Activated CD8-positive, alpha-beta T cell treated with anti-CD3 and anti-CD28 coated beads, Interleukin-2, amount 10 ng/mL, durations not matched to agents 7 days and 5 days (primary cell): ENCODE measurements at regions of chr4 and their contacts with region 1.

Region 1: GRCh38 chr4:143538979-143539669 is 25.6 kb downstream of the SMARCA5 start:
- DNase-seq: no peak
- ATAC-seq: no peak
- H3K4me3 Mint-ChIP-seq: no peak overlapping the region
- H3K27ac Mint-ChIP-seq: no peak overlapping the region
- H3K4me1 Mint-ChIP-seq: no peaks in the 10 kb centered on the region
- H3K27me3 Mint-ChIP-seq: no peaks in the 10 kb centered on the region

Region 2: GRCh38 chr4:143441678-143442077 is 97.4 kb before region 1 on chr4:
- CTCF ChIA-PET with region 1: no interaction called
- POLR2A ChIA-PET with region 1: no interaction called
- DNase-seq: no peak
- ATAC-seq: no peak
- H3K4me3 Mint-ChIP-seq: no peak overlapping the region
- H3K27ac Mint-ChIP-seq: no peak overlapping the region
- H3K4me1 Mint-ChIP-seq: no peaks in the 10 kb centered on the region
- H3K27me3 Mint-ChIP-seq: peaks cover 8% of the 10 kb centered on the region

Region 3: DNA sequence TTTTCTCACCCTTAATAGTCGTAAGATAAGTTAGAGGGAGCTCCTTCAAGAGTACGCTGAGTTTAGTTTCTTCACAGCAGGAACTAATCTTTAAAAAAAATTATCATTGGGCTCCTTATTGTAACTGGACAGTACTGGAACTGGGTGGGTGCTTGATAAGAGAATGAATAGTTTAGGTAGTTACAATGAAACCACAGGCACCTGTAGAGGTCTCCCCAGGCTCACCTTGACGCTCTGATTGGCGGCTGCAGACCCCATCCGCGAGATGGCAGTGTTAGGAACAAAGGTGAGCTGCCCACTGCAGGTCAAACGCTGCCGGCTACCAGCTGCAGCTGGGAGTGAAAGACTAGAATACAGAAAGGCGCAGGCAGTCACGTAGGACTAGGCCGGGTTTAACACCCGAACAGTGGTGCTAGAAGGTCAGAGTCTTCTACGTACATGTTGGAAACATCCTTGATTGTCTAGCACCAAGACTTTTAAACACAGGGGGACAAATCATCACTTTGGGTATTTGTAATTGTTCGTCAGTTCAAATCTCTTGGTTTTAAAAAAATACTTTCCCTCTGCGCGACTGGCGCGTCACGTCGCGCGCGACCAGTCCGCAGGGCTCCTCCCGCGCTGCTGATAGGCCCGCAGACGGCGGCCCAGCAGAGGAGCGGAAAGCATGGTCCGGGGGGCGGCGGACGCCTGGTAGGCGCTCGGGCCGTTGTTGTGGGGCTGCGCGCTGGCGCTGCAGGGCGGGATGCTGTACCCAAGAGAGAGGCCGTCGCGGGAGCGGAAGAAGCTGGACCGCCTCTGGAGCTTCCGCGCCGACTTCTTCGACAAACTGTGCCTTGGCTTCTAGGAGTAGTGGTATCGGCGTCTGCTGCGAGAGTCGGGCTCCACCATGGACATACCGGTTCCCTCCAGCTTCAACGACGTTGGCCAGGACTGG is 20.0 kb after region 1 on chr4:
- CTCF ChIA-PET with region 1: interaction called, 15 read pairs
- POLR2A ChIA-PET with region 1: no interaction called
- DNase-seq: peak; percentile 74
- ATAC-seq: peak; percentile 89
- H3K4me3 Mint-ChIP-seq: peak overlapping the region; percentile 82
- H3K27ac Mint-ChIP-seq: peak overlapping the region; percentile 87
- H3K4me1 Mint-ChIP-seq: peaks cover 29% of the 10 kb centered on the region
- H3K27me3 Mint-ChIP-seq: no peaks in the 10 kb centered on the region